Motor neuron (in vitro differentiated cells): ENCODE measurements at regions of chr1 and their contacts with region 1.

Region 1: DNA sequence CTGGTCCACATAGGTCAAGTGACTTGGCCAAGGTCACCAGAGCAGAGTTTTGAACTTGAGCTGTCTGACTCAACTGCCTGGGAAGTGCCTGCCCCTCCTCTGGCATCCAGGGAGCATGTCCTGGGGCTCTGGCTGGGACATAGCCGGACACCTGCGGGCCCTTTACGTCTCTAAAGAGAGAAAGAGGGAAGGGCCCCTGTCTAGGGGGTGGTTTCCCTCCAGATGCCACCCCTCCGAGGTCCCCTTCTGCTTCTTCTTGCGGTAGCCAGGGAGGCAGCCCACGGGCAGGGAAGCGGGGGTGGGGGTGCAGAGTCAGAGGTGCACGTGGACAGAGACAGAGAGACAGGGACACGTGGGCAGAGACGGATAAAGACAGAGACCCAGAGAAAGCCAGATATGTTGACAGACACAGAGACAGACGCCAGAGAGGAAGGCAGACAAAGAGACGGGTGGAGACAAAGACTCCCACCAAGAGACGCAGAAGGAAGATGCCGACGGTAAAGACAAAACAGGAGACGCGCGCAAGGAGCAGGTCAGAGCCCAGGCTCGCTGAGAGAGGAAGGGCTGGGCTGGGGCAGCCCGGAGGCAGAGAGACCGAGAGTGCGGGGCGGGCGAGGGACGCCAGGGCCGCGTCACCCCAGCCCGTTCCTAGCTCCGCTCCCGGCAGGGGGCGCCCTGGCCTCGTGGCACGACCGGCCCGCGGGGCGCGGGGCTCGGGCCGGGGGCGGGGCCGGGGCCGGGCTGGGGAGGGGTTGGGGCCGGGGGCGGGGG is 458 bp upstream of the ALPL start:
- ATAC-seq: peak; percentile 90 to 98 (median 94)
- H3K4me3 ChIP-seq: peak overlapping the region; percentile 27 to 46 (median 29)
- H3K27ac ChIP-seq: peak overlapping the region in 1 of 2 donors; percentile 4
- H3K4me1 ChIP-seq: peaks cover 0 to 18% of the 10 kb centered on the region in 2 donors

Region 2: GRCh38 chr1:21659099-21659923 is 150.5 kb after region 1 on chr1:
- in situ Hi-C with region 1: loop called in 2 of 9 experiments (anchors 10 to 25 kb)
- ATAC-seq: peak; percentile 76 to 95 (median 88)
- H3K4me3 ChIP-seq: peak overlapping the region; percentile 21 to 32 (median 27)
- H3K27ac ChIP-seq: peak overlapping the region; percentile 2 to 27
- H3K4me1 ChIP-seq: peaks cover 6 to 16% of the 10 kb centered on the region in 2 donors

Region 3: DNA sequence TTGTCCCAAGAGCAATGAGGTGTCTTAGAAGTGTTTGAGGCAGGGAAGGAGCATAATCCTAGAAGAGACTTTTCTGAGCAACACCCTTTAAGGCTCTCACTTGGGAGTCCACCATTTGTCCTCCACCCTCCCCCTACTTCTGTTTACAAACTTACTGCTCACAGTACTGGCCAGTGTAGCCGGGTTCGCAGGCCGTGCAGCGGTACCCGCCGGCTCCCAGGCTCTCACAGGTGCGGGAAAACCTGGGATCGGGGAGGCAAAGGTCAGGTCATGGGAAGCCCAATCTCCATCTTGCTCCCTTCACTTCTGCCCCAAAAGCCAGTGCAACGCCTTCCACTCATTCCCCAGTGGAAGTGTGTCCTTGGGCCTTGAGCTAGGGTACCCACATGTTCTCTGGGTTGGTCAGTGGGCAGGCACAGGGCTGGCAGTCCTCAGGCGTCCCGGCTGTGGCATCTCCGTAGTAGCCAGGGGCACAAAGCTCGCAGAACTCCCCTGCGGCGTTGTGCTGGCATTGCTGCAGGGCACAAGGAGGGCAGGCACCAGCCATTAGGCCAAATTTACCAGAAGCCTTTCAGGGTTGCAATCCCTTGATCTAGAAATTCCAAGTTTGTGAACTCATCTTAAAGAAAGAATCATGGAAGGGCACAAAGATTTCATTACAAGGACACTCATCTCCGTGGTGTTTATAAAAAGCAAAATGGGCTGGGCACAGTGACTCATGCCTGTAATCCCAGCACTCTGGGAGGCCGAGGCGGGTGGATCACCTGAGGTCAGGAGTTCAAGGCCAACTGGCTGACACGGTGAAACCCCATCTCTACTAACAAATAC is 353.1 kb after region 1 on chr1:
- in situ Hi-C with region 1: no loop called
- ATAC-seq: peak in 2 of 8 experiments; percentile 34 to 56
- H3K4me3 ChIP-seq: no peak overlapping the region
- H3K27ac ChIP-seq: no peak overlapping the region
- H3K4me1 ChIP-seq: peaks cover 11 to 14% of the 10 kb centered on the region in 2 donors